Stomach (tissue), 19 donors: ENCODE measurements at regions of chr9 and their contacts with region 1.

Region 1: GRCh38 chr9:121686930-121687541 is 35.6 kb downstream of the DAB2IP start:
- DNase-seq: peak; percentile 87 to 93
- H3K4me3 ChIP-seq: no peak overlapping the region
- H3K27ac ChIP-seq: peak overlapping the region in 1 of 5 donors; percentile 71
- H3K4me1 ChIP-seq: peaks cover 8 to 43% (median 24%) of the 10 kb centered on the region in 4 donors
- H3K27me3 ChIP-seq: no peaks in the 10 kb centered on the region
- CTCF ChIP-seq: peak in 5 of 7 experiments; percentile 76 to 88 (median 84)
- EP300 ChIP-seq: no peak
- POLR2A ChIP-seq: no peak

Region 2: GRCh38 chr9:120583958-120584369 is 1103.1 kb before region 1 on chr9:
- intact Hi-C with region 1: no loop called
- DNase-seq: peak; percentile 28 to 84
- H3K4me3 ChIP-seq: no peak overlapping the region
- H3K27ac ChIP-seq: no peak overlapping the region
- H3K4me1 ChIP-seq: peaks cover 4 to 19% (median 13%) of the 10 kb centered on the region in 4 donors
- H3K27me3 ChIP-seq: no peaks in the 10 kb centered on the region
- CTCF ChIP-seq: no peak
- EP300 ChIP-seq: no peak
- POLR2A ChIP-seq: no peak

Region 3: DNA sequence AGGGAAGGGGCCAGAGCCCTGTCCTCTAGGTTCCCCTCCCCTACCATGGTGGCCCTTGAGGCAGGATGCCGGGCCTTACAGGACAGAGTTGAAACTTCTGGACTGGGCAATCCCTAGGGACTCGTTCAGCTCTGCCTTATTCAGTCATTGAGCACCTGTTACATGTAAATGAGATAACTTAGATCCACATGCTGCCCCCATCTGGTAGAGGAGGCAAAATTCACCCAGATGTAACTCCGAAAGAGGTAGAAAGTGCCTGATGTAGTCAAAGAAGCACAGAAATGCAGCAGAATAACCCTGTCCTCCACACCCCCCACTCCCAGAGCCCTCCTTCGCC is 188.9 kb before region 1 on chr9:
- intact Hi-C with region 1: no loop called
- DNase-seq: peak; percentile 56 to 90
- H3K4me3 ChIP-seq: peak overlapping the region; percentile 47 to 63 (median 57)
- H3K27ac ChIP-seq: peak overlapping the region in 4 of 5 donors; percentile 52 to 80 (median 74)
- H3K4me1 ChIP-seq: peaks cover 25 to 29% (median 27%) of the 10 kb centered on the region in 4 donors
- H3K27me3 ChIP-seq: peaks cover 0 to 28% (median 15%) of the 10 kb centered on the region in 3 donors
- CTCF ChIP-seq: peak in 5 of 7 experiments; percentile 23 to 63 (median 46)
- EP300 ChIP-seq: no peak
- POLR2A ChIP-seq: no peak

Region 4: GRCh38 chr9:121634329-121635261 is 52.4 kb before region 1 on chr9:
- intact Hi-C with region 1: loop called (anchors 10 kb)
- DNase-seq: peak in 1 of 2 donors; percentile 72
- H3K4me3 ChIP-seq: no peak overlapping the region
- H3K27ac ChIP-seq: peak overlapping the region in 1 of 5 donors; percentile 71
- H3K4me1 ChIP-seq: peaks cover 18 to 59% (median 38%) of the 10 kb centered on the region in 4 donors
- H3K27me3 ChIP-seq: no peaks in the 10 kb centered on the region
- CTCF ChIP-seq: peak in 5 of 7 experiments; percentile 23 to 43 (median 31)
- EP300 ChIP-seq: no peak
- POLR2A ChIP-seq: no peak

Region 5: GRCh38 chr9:121992571-121993212 is 305.7 kb after region 1 on chr9:
- intact Hi-C with region 1: loop called (anchors 10 kb)
- DNase-seq: peak; percentile 67 to 90
- H3K4me3 ChIP-seq: no peak overlapping the region
- H3K27ac ChIP-seq: no peak overlapping the region
- H3K4me1 ChIP-seq: peaks cover 0 to 22% (median 13%) of the 10 kb centered on the region in 4 donors
- H3K27me3 ChIP-seq: no peaks in the 10 kb centered on the region
- CTCF ChIP-seq: peak in 5 of 7 experiments; percentile 49 to 89 (median 84)
- EP300 ChIP-seq: no peak
- POLR2A ChIP-seq: no peak

Region 6: DNA sequence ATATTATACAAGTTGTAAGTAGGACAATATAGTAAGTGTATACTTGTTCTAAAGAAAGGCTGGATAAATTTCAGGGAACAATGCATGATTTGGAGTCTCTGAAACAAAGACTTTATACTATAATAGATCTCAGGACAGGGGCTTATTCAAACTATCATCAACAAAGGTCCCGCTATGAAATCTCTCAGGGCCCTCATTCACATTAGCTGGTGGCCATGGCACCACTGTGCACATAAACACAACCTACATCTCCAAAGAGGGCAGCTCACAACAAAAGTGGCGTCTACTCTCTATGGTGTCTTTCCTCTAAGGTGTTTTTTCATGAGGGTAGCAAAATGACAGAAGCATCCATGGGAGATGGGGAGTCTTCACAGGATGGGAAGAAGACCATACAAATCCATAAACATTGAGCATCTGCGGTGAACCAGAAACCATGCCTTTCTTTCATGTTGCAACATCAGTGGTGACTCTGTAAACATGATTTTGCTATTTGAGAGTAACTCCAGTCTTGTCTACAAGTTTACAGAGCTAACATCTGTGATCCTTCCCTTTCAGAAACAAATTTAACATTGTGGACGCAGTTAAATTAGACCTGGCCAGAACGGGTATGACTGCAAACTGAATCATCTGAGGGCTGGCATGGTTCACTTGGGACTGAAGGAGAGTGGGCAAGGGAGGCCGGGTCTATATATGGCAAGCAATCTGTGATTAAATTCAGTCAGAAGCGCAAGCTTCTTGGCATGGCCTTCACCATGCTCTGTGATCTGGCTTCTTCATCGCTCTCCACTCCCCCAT is 400.6 kb after region 1 on chr9:
- intact Hi-C with region 1: no loop called
- DNase-seq: no peak
- H3K4me3 ChIP-seq: no peak overlapping the region
- H3K27ac ChIP-seq: peak overlapping the region; percentile 9 to 69 (median 39)
- H3K4me1 ChIP-seq: peaks cover 20 to 73% (median 45%) of the 10 kb centered on the region in 4 donors
- H3K27me3 ChIP-seq: no peaks in the 10 kb centered on the region
- CTCF ChIP-seq: no peak
- EP300 ChIP-seq: no peak
- POLR2A ChIP-seq: no peak